ENCODE measurements at regions of chr6 and their contacts with region 1.

Region 1: DNA sequence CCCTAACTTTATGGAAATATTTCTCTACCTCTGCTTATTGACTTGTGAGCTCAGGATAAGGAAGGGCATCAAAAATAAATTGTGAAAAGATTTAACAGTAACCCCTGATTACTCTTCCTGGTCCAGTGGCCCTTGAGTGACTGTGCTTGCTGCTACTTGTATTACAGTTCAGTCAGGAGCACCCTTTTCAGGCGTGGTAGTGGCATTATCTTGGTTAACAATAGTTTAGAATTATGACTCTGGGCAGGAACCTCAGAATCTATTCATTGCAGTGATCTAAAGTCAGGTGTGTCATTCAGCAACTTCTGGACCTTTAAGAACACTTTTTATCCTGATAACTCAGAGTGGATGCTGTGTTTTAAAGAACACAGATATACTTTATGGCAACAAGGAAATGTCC is 43.4 kb downstream of the FAM135A start:
- DNase-seq: no peak
- H3K4me3 ChIP-seq: no peak overlapping the region
- H3K27ac ChIP-seq: no peak overlapping the region
- H3K4me1 ChIP-seq: no peaks in the 10 kb centered on the region
- H3K27me3 ChIP-seq: no peaks in the 10 kb centered on the region
- CTCF ChIP-seq: no peak
- POLR2A ChIP-seq: no peak

Region 2: GRCh38 chr6:70601014-70601413 is 144.3 kb after region 1 on chr6:
- intact Hi-C with region 1: loop called (anchors 5 kb)
- DNase-seq: no peak
- H3K4me3 ChIP-seq: no peak overlapping the region
- H3K27ac ChIP-seq: no peak overlapping the region
- H3K4me1 ChIP-seq: no peaks in the 10 kb centered on the region
- H3K27me3 ChIP-seq: no peaks in the 10 kb centered on the region
- CTCF ChIP-seq: no peak
- POLR2A ChIP-seq: no peak

Measured in breast epithelium (tissue), 4 donors.